HAP-1 (cell line): ENCODE measurements at regions of chr6 and their contacts with region 1.

Region 1: GRCh38 chr6:152124429-152125074 is 317.1 kb downstream of the ESR1 start:
- DNase-seq: peak; percentile 15 to 64
- H3K4me3 ChIP-seq: no peak overlapping the region
- H3K4me1 ChIP-seq: peaks cover 13% of the 10 kb centered on the region
- H3K27me3 ChIP-seq: no peaks in the 10 kb centered on the region

Region 2: DNA sequence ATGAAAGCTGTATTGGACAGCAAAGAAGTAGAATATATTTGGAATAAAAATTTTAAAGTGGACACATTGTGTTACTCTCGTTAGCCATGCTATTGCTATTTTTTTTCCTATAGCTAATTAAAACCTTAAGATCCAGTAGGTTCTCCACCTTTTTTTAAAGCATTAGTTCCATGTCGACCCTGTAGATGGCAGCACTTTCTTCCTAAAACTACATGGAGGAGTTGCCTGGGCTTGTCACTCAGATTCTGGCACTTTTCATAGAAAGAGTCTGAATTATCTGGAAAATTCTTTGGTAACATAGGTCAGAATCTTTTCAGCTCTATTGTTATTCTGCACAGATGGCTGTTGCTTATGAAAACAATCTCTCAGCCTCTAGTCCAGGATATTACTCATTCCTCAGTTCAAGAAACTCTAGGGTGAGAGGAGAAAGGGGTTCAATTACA is 359.1 kb before region 1 on chr6:
- in situ Hi-C with region 1: loop called (anchors 10 kb)
- DNase-seq: peak; percentile 78 to 80
- H3K4me3 ChIP-seq: no peak overlapping the region
- H3K4me1 ChIP-seq: peaks cover 5% of the 10 kb centered on the region
- H3K27me3 ChIP-seq: 0 out of 2 replicates have a peak, but pooled peaks cover 2% of the 10 kb centered on the region